ENCODE measurements at regions of chr15 and their contacts with region 1.

Region 1: GRCh38 chr15:57158589-57158988 is 217.7 kb upstream of the CGNL1 start:
- DNase-seq: no peak
- H3K4me3 ChIP-seq: no peak overlapping the region
- H3K27ac ChIP-seq: no peak overlapping the region
- H3K4me1 ChIP-seq: no peaks in the 10 kb centered on the region
- H3K27me3 ChIP-seq: no peaks in the 10 kb centered on the region
- CTCF ChIP-seq: no peak
- POLR2A ChIP-seq: no peak

Region 2: DNA sequence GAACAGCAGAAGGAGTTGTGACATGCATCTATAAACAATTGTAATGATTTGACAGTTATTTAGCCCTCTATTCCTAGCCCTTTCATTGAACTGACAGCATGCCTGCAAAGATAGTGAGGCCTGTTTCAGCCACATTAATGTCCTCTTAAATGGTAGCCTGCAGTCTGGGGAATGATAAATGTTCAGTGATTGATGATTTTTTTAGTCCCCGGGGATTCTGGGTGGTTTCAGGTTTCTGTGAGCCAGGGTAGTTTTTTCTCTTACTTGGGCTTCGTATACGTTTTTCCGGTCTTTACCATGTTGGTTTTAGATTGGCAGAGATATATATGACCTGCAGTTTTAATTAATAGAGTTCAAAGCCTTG is 68.1 kb before region 1 on chr15:
- intact Hi-C with region 1: no loop called
- DNase-seq: no peak
- H3K4me3 ChIP-seq: no peak overlapping the region
- H3K27ac ChIP-seq: no peak overlapping the region
- H3K4me1 ChIP-seq: no peaks in the 10 kb centered on the region
- H3K27me3 ChIP-seq: no peaks in the 10 kb centered on the region
- CTCF ChIP-seq: no peak
- POLR2A ChIP-seq: no peak

Region 3: DNA sequence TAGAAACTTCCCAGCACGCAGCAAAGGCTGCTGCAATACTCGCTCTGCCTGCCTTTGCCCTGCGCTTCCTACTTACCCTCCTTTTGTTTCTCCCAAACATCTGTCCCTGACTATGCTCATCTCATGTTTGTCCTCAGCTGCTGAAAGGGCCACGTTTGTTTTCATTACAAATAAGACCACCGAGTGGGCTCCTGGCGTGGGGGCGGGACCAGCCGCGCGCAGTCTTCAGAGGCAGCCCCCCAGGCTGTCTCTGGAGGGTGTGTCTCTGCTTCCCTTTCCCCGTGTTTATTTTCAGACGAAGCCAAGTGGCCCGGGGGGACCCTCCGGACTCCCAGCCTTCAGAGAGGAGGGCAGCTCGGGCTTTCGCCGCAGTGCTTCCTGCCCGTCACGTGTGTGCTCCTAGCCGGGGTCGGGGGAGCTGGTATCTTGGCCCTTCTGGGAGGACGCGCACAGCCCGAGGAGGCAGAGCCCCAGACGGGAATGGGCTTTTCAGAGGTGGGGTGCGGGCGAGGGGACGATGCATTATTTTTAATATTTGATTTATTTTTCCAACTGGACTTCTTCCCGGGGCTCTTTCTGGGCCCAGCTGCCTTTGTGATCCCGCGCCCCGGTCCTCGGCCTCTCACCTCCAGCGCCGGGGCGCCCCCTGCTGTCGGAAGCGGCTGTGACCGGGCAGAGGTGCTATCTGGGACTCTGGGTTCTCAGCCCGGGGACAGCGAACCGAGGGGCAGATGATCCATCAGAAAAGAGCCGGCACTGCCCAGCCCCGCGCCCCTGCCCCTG is 147.8 kb after region 1 on chr15:
- intact Hi-C with region 1: loop called (anchors 10 kb)
- DNase-seq: peak; percentile 77 to 83
- H3K4me3 ChIP-seq: peak overlapping the region; percentile 39 to 53
- H3K27ac ChIP-seq: peak overlapping the region; percentile 36 to 65
- H3K4me1 ChIP-seq: peaks cover 0 to 6% of the 10 kb centered on the region in 2 donors
- H3K27me3 ChIP-seq: no peaks in the 10 kb centered on the region
- CTCF ChIP-seq: peak; percentile 82 to 90 (median 84)
- POLR2A ChIP-seq: no peak

Measured in uterus (tissue), 4 donors.